ENCODE measurements at regions of chr1 and their contacts with region 1.

Region 1: GRCh38 chr1:226736908-226737818 is 1.9 kb downstream of the ITPKB start:
- DNase-seq: peak; percentile 40 to 77 (median 51)
- ATAC-seq: peak in 3 of 4 donors; percentile 17 to 68 (median 56)
- H3K4me3 ChIP-seq: peak overlapping the region; percentile 54 to 98 (median 88)
- H3K27ac ChIP-seq: peak overlapping the region; percentile 84 to 96 (median 92)
- H3K4me1 ChIP-seq: peaks cover 0 to 62% (median 34%) of the 10 kb centered on the region in 12 donors
- H3K27me3 ChIP-seq: no peaks in the 10 kb centered on the region
- CTCF ChIP-seq: peak in 2 of 12 donors; percentile 21 to 29
- POLR2A ChIP-seq: no peak

Region 2: GRCh38 chr1:226642876-226643576 is 94.1 kb before region 1 on chr1:
- intact Hi-C with region 1: loop called in 4 of 10 experiments (anchors 5 to 10 kb)
- DNase-seq: peak in 3 of 5 donors; percentile 26 to 42 (median 30)
- ATAC-seq: peak in 2 of 4 donors; percentile 13 to 30
- H3K4me3 ChIP-seq: no peak overlapping the region
- H3K27ac ChIP-seq: peak overlapping the region in 3 of 12 donors; percentile 5 to 81 (median 69)
- H3K4me1 ChIP-seq: peaks cover 0 to 53% (median 30%) of the 10 kb centered on the region in 12 donors
- H3K27me3 ChIP-seq: no peaks in the 10 kb centered on the region
- CTCF ChIP-seq: no peak
- POLR2A ChIP-seq: no peak

Region 3: GRCh38 chr1:226656601-226657277 is 80.4 kb before region 1 on chr1:
- intact Hi-C with region 1: loop called in 8 of 10 experiments (anchors 5 kb)
- DNase-seq: peak in 3 of 5 donors; percentile 29 to 34 (median 32)
- ATAC-seq: no peak
- H3K4me3 ChIP-seq: no peak overlapping the region
- H3K27ac ChIP-seq: peak overlapping the region in 8 of 12 donors; percentile 63 to 94 (median 79)
- H3K4me1 ChIP-seq: peaks cover 0 to 89% (median 75%) of the 10 kb centered on the region in 12 donors
- H3K27me3 ChIP-seq: no peaks in the 10 kb centered on the region
- CTCF ChIP-seq: no peak
- POLR2A ChIP-seq: no peak

Region 4: DNA sequence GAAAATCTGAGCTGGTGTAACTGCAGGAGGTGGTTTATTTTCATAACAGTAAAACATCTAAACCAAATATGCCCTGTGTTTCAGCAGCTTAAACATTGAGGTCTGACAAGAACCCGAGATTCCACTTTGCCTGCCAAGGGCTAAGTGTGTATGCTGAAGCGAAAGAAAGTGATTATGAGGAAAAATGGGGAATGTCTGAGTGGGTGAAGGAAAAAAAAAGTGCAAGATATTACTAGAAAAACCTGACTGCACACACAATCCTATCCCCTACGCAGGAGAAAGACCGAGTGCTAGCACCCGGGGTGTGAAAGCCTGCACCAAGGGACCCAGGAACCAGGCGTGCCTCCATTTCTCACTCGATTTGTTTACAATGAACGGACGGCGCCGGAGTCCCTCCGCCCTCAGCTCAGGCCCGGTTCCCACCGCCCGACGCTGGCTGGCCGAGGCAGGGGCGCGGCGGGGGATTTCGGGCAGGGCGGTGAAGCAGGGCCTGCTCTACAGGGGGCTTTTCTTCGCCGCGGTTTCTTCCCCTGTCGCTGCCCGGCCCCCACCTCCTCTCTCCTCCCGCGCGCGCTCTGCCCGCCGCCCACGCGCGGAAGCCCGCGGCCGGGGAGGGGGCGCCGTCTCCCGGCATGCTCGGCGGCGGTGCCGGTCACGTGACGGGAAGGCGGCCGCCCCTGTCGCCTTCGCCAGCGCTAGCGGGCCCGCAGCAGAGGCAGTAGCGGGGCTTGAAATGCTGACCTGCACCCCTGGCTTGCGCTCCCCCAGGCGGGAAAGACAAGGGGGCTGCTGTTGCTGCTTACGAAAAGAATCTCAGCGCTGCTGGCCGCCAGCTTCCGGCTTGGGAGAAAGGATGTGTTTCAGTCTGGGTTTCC is 34.0 kb before region 1 on chr1:
- intact Hi-C with region 1: loop called in 5 of 10 experiments (anchors 5 kb)
- DNase-seq: peak; percentile 85 to 88 (median 87)
- ATAC-seq: peak; percentile 68 to 94 (median 89)
- H3K4me3 ChIP-seq: peak overlapping the region; percentile 54 to 84 (median 69)
- H3K27ac ChIP-seq: peak overlapping the region in 11 of 12 donors; percentile 94 to 99 (median 97)
- H3K4me1 ChIP-seq: peaks cover 4 to 62% (median 41%) of the 10 kb centered on the region in 12 donors
- H3K27me3 ChIP-seq: no peaks in the 10 kb centered on the region
- CTCF ChIP-seq: peak in 1 of 12 donors; percentile 6
- POLR2A ChIP-seq: peak in 1 of 2 donors; percentile 78

Region 5: DNA sequence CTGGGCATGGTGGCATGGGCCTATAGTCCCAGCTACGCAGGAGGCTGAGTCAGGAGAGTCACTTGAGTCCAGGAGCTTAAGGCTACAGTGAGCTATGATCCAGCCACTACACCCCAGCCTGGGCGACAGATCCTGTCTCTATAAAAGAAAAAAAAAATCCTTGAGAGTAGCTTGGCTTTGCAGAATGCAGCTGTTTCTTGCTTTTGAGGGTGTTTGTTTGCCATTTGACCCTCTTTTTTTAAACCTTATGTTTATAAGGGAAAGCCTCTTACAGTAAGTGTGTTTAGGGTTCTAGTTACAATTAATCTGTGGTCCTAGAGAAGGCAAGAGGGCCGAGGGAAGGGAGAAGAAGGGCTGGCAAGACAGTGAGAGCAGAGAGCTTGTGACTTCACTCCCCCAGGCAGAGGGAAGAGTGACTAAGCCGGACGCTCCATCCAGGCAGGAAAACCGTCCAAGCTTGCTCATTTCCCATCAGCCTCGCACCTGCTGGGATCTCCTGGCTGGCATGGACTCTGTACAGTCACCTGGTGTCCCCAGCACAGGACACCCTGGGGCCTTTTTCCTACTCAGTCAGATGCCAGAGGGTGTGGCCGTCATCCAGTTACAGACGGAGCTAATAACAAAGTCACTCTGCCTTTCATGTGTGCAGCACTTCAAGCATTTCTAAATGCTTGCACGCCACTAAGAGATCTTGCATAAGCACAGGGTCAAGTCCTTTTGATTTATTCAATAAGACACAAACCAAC is 77.8 kb after region 1 on chr1:
- intact Hi-C with region 1: loop called in 5 of 10 experiments (anchors 2 to 10 kb)
- DNase-seq: peak in 4 of 5 donors; percentile 60 to 74 (median 68)
- ATAC-seq: peak; percentile 83 to 95 (median 90)
- H3K4me3 ChIP-seq: peak overlapping the region in 1 of 12 donors; percentile 8
- H3K27ac ChIP-seq: peak overlapping the region in 11 of 12 donors; percentile 12 to 87 (median 74)
- H3K4me1 ChIP-seq: peaks cover 0 to 32% (median 27%) of the 10 kb centered on the region in 12 donors
- H3K27me3 ChIP-seq: no peaks in the 10 kb centered on the region
- CTCF ChIP-seq: no peak
- POLR2A ChIP-seq: no peak

Region 6: GRCh38 chr1:226827968-226828513 is 90.9 kb after region 1 on chr1:
- intact Hi-C with region 1: loop called in 8 of 10 experiments (anchors 2 to 10 kb)
- DNase-seq: peak; percentile 94 to 98 (median 97)
- ATAC-seq: peak; percentile 96 to 98 (median 97)
- H3K4me3 ChIP-seq: peak overlapping the region in 8 of 12 donors; percentile 18 to 47 (median 33)
- H3K27ac ChIP-seq: peak overlapping the region; percentile 27 to 93 (median 85)
- H3K4me1 ChIP-seq: peaks cover 0 to 20% (median 14%) of the 10 kb centered on the region in 12 donors
- H3K27me3 ChIP-seq: no peaks in the 10 kb centered on the region
- CTCF ChIP-seq: peak; percentile 92 to 98 (median 96)
- POLR2A ChIP-seq: no peak

Region 7: DNA sequence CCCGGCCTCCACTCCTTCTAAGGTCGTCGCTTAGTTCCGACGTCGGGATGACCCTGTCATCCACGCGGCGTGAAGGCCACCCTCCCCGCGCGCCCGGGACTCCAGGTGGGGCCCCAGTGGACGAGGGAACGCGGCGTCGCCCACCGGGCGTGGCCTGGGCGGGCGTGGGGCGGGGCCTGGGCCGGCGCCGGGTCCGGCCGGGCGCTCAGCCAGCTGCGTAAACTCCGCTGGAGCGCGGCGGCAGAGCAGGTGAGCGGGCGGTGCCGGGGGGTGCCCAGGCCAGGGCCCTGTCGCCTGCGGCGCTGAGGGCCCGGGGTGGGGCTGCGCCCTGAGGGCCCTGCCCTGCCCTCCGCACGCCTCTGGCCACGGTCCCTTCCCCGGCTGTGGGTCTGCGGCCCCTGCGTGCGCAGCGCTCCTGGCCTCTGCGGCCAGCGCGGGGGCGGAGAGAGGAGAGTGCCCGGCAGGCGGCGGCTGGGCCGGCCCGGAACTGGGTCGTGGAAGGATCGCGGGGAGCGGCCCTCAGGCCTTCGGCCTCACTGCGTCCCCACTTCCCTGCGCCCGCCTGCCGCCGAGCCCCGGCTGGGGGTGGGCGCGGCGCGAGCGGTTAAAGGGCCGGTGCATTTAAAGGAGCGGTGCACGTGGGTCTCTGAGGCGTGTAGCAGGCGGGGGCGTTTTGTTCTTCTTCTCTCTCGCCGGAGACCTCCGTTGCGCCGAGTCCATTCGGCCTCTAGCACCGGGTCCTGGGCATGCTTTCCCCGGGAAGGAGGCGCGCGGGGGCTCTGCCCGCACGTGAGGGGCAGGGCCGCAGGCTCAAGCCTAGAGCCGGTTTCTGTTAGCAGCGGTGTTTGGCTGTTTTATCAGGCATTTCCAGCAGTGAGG is 133.5 kb after region 1 on chr1 and contains the start of gene PSEN2:
- intact Hi-C with region 1: no loop called
- DNase-seq: peak; percentile 71 to 89 (median 80)
- ATAC-seq: peak; percentile 59 to 91 (median 88)
- H3K4me3 ChIP-seq: peak within 1 kb of the TSS; percentile 68 to 98 (median 80)
- H3K27ac ChIP-seq: peak within 1 kb of the TSS in 11 of 12 donors; percentile 52 to 89 (median 81)
- H3K4me1 ChIP-seq: peaks cover 5 to 41% (median 21%) of the 10 kb centered on the region in 12 donors
- H3K27me3 ChIP-seq: no peaks in the 10 kb centered on the region
- CTCF ChIP-seq: peak in 9 of 12 donors; percentile 13 to 46 (median 22)
- POLR2A ChIP-seq: peak in 1 of 2 donors; percentile 67
- total RNA-seq, gene PSEN2: 17.2 to 30.9 (median 21.7) TPM